Activated CD8-positive, alpha-beta T cell treated with anti-CD3 and anti-CD28 coated beads for 36 hours (primary cell): ENCODE measurements at regions of chr19 and their contacts with region 1.

Region 1: DNA sequence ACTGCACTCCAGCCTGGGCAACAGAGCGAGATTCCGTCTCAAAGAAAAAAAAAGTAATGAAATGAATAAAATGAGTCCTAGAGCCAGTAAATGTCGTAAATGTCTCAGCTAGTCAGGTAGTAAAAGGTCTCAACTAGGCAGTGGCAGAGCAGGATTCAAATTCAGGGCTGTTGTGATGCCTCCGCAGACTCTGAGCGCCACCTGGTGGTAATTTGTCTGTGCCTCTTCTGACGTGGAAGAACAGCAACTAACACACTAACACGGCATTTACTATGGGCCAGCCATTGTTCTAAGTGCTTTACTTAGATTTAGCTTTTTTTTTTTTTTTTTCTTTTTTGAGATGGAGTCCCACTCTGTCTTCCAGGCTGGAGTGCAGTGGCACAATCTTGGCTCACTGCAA is 30.2 kb downstream of the CYP2F1 start:
- DNase-seq: peak; percentile 95
- ATAC-seq: peak; percentile 91
- H3K4me3 Mint-ChIP-seq: no peak overlapping the region
- H3K27ac Mint-ChIP-seq: no peak overlapping the region
- H3K4me1 Mint-ChIP-seq: no peaks in the 10 kb centered on the region
- H3K27me3 Mint-ChIP-seq: peaks cover 4% of the 10 kb centered on the region
- CTCF ChIP-seq: peak; percentile 78

Region 2: GRCh38 chr19:40974633-40975037 is 169.8 kb before region 1 on chr19:
- CTCF ChIA-PET with region 1: interaction called, 20 read pairs
- POLR2A ChIA-PET with region 1: no interaction called
- intact Hi-C with region 1: loop called (anchors 2 kb)
- DNase-seq: peak; percentile 90
- ATAC-seq: peak; percentile 80
- H3K4me3 Mint-ChIP-seq: no peak overlapping the region
- H3K27ac Mint-ChIP-seq: no peak overlapping the region
- H3K4me1 Mint-ChIP-seq: peaks cover 25% of the 10 kb centered on the region
- H3K27me3 Mint-ChIP-seq: peaks cover 2% of the 10 kb centered on the region
- CTCF ChIP-seq: peak; percentile 93

Region 3: DNA sequence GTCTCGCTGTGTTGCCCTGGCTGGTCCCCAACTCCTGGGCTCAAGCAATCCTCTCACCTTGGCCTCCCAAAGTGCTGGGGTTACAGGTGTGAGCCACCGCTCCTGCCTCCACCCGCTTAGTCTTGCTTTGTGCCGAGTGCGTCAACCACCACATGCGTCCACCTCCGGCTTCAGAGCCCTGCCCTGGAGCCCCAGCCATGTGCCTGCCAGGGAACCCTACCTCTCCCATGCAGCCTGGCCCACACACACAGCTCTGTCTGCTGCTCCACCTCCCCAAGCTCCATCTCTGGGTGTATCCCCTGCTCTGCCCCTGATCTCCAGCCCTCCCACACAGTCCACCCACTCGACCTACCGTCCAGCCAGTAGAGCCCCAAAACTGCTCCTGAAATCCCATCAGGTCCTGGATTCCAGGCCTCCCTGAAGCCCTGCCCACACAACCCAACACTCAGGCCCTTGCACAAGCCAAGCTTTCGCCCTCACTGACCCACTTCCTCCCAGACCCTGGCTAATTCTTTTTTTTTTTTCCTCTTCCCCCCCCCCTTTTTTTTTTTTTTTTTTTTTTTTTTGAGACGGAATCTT is 20.6 kb before region 1 on chr19:
- CTCF ChIA-PET with region 1: interaction called, 25 read pairs
- POLR2A ChIA-PET with region 1: no interaction called
- intact Hi-C with region 1: no loop called
- DNase-seq: no peak
- ATAC-seq: no peak
- H3K4me3 Mint-ChIP-seq: no peak overlapping the region
- H3K27ac Mint-ChIP-seq: no peak overlapping the region
- H3K4me1 Mint-ChIP-seq: peaks cover 33% of the 10 kb centered on the region
- H3K27me3 Mint-ChIP-seq: no peaks in the 10 kb centered on the region
- CTCF ChIP-seq: no peak